ENCODE measurements at regions of chr1 and their contacts with region 1.

Region 1: GRCh38 chr1:183655562-183656075 is 2.5 kb upstream of the APOBEC4 start:
- DNase-seq: peak; percentile 87
- H3K4me3 Mint-ChIP-seq: peak overlapping the region; percentile 13
- H3K27ac Mint-ChIP-seq: no peak overlapping the region
- H3K4me1 Mint-ChIP-seq: peaks cover 40% of the 10 kb centered on the region
- H3K27me3 Mint-ChIP-seq: no peaks in the 10 kb centered on the region

Region 2: GRCh38 chr1:183685112-183685713 is 29.6 kb after region 1 on chr1:
- CTCF ChIA-PET with region 1: interaction called, 67 read pairs
- intact Hi-C with region 1: loop called (anchors 1 kb)
- DNase-seq: peak; percentile 41
- H3K4me3 Mint-ChIP-seq: no peak overlapping the region
- H3K27ac Mint-ChIP-seq: no peak overlapping the region
- H3K4me1 Mint-ChIP-seq: peaks cover 8% of the 10 kb centered on the region
- H3K27me3 Mint-ChIP-seq: no peaks in the 10 kb centered on the region

Region 3: GRCh38 chr1:183956559-183957188 is 301.1 kb after region 1 on chr1:
- CTCF ChIA-PET with region 1: interaction called, 10 read pairs
- intact Hi-C with region 1: loop called (anchors 1 kb)
- DNase-seq: peak; percentile 71
- H3K4me3 Mint-ChIP-seq: no peak overlapping the region
- H3K27ac Mint-ChIP-seq: peak overlapping the region; percentile 86
- H3K4me1 Mint-ChIP-seq: no peaks in the 10 kb centered on the region
- H3K27me3 Mint-ChIP-seq: no peaks in the 10 kb centered on the region

Region 4: DNA sequence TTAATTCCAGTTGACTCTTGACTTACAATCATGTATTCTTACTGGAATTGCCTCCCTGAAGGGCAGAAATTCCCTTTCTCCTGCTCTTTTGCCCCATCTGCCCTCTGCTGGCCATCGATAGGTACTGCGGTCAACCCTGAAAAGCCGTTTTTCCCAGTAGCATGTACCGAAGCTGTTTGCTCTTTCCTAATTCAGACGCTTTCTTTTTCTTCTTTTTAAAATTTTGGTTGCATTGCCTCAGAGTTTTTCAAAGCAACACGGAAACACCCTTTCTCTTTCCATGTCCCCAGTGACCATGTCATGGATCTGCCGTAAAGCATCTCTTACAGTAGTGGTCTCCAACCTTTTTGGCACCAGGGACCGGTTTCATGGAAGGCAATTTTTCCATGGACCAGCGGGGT is 567.0 kb after region 1 on chr1:
- CTCF ChIA-PET with region 1: interaction called, 3 read pairs
- intact Hi-C with region 1: loop called (anchors 1 kb)
- DNase-seq: peak; percentile 59
- H3K4me3 Mint-ChIP-seq: no peak overlapping the region
- H3K27ac Mint-ChIP-seq: no peak overlapping the region
- H3K4me1 Mint-ChIP-seq: no peaks in the 10 kb centered on the region
- H3K27me3 Mint-ChIP-seq: peaks cover 2% of the 10 kb centered on the region

Region 5: DNA sequence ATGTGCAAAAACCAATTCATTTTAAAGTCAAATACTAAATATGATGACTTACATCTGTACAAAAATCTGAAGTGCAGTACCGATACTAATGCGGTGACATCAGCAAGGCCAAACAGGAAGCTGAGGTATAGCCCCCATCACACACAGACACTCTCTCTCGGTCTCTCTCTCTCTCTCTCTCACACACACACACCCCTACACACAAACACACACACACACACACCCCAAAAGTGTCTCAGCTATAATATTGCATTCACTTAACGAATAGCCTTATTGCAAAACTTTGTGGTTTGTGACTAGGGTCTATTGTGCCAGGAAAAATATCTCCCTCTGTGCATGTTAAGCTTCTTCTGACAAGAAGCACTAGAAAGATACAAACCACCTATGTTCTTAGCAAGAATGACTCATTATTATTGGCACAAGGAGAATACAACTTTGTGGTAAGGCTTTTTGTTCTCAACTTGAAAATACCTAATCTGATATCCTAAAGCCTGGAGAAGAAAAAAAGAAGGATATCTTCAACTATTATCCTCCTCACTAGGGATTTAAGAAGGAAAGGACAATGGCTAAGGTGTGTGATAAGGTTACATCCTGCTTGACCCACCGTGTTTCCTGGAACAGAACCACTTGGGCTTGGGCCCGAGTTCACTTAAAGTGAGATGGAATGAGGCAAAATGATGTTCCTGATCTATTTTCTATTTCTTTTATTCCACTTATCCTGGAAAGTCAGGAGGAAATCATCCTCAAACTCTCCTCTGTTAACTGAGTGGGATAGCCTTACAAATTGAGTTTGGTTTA is 1211.6 kb after region 1 on chr1:
- CTCF ChIA-PET with region 1: no interaction called
- intact Hi-C with region 1: loop called (anchors 2 kb)
- DNase-seq: peak; percentile 80
- H3K4me3 Mint-ChIP-seq: peak overlapping the region; percentile 14
- H3K27ac Mint-ChIP-seq: peak overlapping the region; percentile 94
- H3K4me1 Mint-ChIP-seq: peaks cover 32% of the 10 kb centered on the region
- H3K27me3 Mint-ChIP-seq: peaks cover 10% of the 10 kb centered on the region